ENCODE measurements at regions of chr3 and their contacts with region 1.

Region 1: DNA sequence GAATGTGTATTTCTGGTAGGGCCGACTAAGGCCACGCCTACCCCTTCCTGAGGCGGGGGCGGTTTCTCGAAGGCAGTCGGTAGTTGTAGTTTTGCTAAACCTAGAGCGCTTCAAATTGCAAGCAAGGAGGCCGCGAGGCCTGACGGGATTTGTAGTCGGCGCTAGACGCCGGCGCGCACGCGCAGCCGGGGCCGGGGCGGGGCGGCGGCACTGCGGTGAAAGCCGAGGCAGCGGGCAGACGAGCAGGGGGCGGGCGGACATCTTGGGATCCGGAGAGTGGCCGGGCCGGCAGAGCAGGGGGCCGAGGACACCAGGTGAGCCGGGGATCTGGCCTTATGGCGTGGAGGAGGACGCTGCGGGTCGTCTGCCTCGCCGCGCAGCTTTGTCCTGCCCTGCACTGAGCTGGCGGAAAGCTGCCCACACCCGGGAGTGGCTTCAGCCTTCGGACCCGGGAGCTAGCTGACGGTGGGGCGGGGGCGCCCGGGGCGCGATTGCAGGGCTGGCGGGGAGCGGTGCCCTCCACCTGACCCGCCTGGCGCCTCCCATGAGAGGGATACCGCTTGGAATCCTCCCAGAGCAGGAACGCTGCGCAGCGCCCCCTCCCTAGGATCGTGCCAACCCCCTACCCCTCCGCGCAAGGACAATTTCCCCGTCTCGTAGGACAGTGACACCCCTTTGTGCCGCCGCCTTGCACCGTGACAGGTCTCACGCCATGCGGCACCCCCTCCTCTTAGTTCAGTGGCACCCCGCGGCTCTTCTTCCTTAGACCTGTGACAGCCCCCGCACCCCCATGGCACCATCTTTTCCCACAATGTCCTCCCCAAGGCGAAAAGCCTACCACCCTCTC is at the start of gene AP2M1:
- DNase-seq: peak; percentile 99
- ATAC-seq: peak; percentile 95
- total RNA-seq, gene AP2M1: 269 TPM

Region 2: DNA sequence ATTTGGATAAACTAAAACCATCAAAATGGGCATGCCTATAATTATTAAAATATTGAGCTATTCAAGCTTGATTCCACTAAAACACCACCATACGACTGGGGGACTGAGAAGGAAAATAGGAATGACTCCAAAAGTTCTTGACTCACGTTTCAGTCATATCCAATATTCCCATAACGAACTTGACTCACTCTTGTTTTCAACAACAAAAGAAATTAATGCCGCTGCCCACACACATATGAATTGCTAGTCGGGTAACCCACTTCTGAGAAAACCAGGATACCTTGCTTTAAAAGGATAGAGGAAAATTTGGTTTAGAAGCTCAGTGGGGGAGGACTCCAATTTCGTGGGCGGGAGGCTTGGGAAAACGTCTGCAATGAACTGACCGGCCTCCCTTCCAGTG is 116.8 kb before region 1 on chr3:
- intact Hi-C with region 1: no loop called
- DNase-seq: no peak
- ATAC-seq: no peak

Region 3: GRCh38 chr3:184154885-184155643 is 19.8 kb before region 1 on chr3 and contains the start of gene DVL3:
- intact Hi-C with region 1: loop called (anchors 2 kb)
- DNase-seq: peak; percentile 85
- ATAC-seq: peak; percentile 90
- total RNA-seq, gene DVL3: 60.7 TPM

Region 4: GRCh38 chr3:184314363-184314699 is 139.5 kb after region 1 on chr3 and contains the start of gene EIF4G1:
- intact Hi-C with region 1: no loop called
- DNase-seq: peak; percentile 98
- ATAC-seq: peak; percentile 94
- total RNA-seq, gene EIF4G1: 274 TPM